ENCODE measurements at regions of chr17 and their contacts with region 1.

Region 1: DNA sequence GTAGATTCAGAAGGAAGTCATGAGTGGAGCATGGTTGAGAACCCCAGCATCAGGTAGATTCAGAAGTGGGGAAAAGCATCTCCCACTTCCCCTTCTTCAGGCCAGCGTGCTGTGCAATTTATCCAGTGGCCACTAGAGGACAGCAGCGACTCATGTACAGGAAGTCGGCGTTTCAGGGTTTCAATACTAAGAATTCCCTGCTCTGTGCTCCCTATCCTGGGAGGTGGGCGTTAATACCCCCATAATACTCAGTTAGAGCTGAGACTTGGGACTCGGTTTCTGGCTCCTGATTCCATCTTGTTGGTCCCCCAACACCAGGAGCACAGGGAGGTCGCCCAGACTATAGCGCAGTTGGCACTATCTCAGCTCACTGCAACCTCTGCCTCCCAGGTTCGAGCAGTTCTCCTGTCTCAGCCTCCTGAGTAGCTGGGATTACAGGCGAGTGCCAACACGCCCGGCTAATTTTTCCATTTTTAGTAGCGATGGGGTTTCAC is 75.3 kb upstream of the AMZ2 start:
- DNase-seq: peak; percentile 58
- ATAC-seq: peak; percentile 97
- H3K4me3 Mint-ChIP-seq: no peak overlapping the region
- H3K27ac Mint-ChIP-seq: no peak overlapping the region
- H3K4me1 Mint-ChIP-seq: peaks cover 6% of the 10 kb centered on the region
- H3K27me3 Mint-ChIP-seq: no peaks in the 10 kb centered on the region
- CTCF ChIP-seq: peak; percentile 91

Region 2: DNA sequence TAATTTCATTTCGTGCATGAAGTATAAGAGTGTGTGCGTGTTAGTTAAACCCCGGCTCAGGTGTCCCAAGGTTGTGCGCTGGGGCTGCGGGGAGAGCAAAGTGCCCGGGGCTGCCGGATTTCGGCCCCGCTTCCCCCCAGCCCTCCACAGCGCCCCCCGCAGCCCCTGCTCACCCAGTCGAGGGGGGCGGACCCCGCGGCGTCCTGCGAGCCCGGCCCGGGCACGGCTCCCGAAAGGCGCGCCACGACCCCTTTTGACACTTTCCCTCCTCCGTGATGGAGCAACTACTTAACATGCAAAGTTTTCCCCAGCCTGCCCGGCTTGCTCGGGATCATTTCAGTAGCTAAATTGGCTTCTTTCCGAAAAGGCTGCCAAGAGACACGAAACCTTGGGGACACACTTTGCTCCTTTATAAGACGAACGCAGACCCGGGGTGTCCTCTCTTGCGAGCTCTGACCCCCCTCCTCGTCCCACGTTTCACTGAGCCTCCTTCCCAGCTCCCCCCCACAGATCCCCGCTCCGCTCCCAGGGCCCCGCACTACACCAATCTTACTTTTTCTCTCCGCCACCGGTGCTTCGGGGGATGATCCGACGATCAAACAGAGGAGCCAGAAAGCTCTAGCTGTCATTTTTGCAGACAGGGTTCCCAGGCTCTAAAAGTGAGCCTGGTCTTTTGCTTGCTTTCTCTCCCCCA is 176.8 kb before region 1 on chr17:
- CTCF ChIA-PET with region 1: no interaction called
- POLR2A ChIA-PET with region 1: no interaction called
- intact Hi-C with region 1: no loop called
- DNase-seq: peak; percentile 32
- ATAC-seq: no peak
- H3K4me3 Mint-ChIP-seq: peak overlapping the region; percentile 88
- H3K27ac Mint-ChIP-seq: no peak overlapping the region
- H3K4me1 Mint-ChIP-seq: peaks cover 34% of the 10 kb centered on the region
- H3K27me3 Mint-ChIP-seq: peaks cover 18% of the 10 kb centered on the region
- CTCF ChIP-seq: no peak

Region 3: GRCh38 chr17:68184816-68185436 is 12.4 kb after region 1 on chr17:
- CTCF ChIA-PET with region 1: interaction called, 33 read pairs
- POLR2A ChIA-PET with region 1: interaction called, 4 read pairs
- intact Hi-C with region 1: loop called (anchors 1 kb)
- DNase-seq: no peak
- ATAC-seq: peak; percentile 69
- H3K4me3 Mint-ChIP-seq: peak overlapping the region; percentile 62
- H3K27ac Mint-ChIP-seq: peak overlapping the region; percentile 91
- H3K4me1 Mint-ChIP-seq: peaks cover 66% of the 10 kb centered on the region
- H3K27me3 Mint-ChIP-seq: no peaks in the 10 kb centered on the region
- CTCF ChIP-seq: no peak

Region 4: GRCh38 chr17:68196944-68197595 is 24.6 kb after region 1 on chr17:
- CTCF ChIA-PET with region 1: interaction called, 77 read pairs
- POLR2A ChIA-PET with region 1: interaction called, 10 read pairs
- intact Hi-C with region 1: loop called (anchors 1 kb)
- DNase-seq: peak; percentile 53
- ATAC-seq: peak; percentile 32
- H3K4me3 Mint-ChIP-seq: peak overlapping the region; percentile 78
- H3K27ac Mint-ChIP-seq: no peak overlapping the region
- H3K4me1 Mint-ChIP-seq: peaks cover 44% of the 10 kb centered on the region
- H3K27me3 Mint-ChIP-seq: peaks cover 10% of the 10 kb centered on the region
- CTCF ChIP-seq: no peak

Region 5: DNA sequence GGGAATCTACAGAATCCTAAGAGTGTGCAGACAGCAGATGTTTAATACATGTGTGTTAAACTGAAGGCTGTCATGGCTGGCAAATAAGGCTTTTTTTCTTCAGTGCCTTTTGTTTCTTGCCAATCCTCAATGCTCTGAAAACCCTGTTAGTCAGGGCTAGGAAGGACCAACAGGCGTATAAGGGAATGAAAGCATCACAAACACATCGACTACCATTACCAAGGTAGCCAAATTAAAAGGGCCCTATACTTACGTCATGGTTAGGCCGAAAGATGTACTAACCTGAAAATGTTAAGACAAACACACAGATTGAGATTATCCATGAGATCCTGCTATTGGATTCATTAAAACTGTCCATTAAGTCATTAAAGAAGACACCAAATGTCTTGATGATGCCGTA is 105.3 kb after region 1 on chr17:
- CTCF ChIA-PET with region 1: no interaction called
- POLR2A ChIA-PET with region 1: no interaction called
- intact Hi-C with region 1: no loop called
- DNase-seq: no peak
- ATAC-seq: no peak
- H3K4me3 Mint-ChIP-seq: no peak overlapping the region
- H3K27ac Mint-ChIP-seq: no peak overlapping the region
- H3K4me1 Mint-ChIP-seq: no peaks in the 10 kb centered on the region
- H3K27me3 Mint-ChIP-seq: no peaks in the 10 kb centered on the region
- CTCF ChIP-seq: no peak

Region 6: GRCh38 chr17:68398691-68399637 is 226.5 kb after region 1 on chr17:
- CTCF ChIA-PET with region 1: interaction called, 17 read pairs
- POLR2A ChIA-PET with region 1: interaction called, 3 read pairs
- intact Hi-C with region 1: loop called (anchors 1 kb)
- DNase-seq: peak; percentile 23
- ATAC-seq: peak; percentile 76
- H3K4me3 Mint-ChIP-seq: no peak overlapping the region
- H3K27ac Mint-ChIP-seq: peak overlapping the region; percentile 62
- H3K4me1 Mint-ChIP-seq: peaks cover 7% of the 10 kb centered on the region
- H3K27me3 Mint-ChIP-seq: no peaks in the 10 kb centered on the region
- CTCF ChIP-seq: no peak

Measured in activated B cell treated with CpG ODN at 0.5 μM for 24 hours (primary cell).